ENCODE measurements at regions of chr17 and their contacts with region 1.

Region 1: GRCh38 chr17:7614422-7615264 is at the start of gene FXR2:
- DNase-seq: peak; percentile 100
- ATAC-seq: peak; percentile 96
- H3K4me3 Mint-ChIP-seq: peak within 1 kb of the TSS; percentile 90
- H3K27ac Mint-ChIP-seq: peak within 1 kb of the TSS; percentile 89
- H3K4me1 Mint-ChIP-seq: peaks cover 31% of the 10 kb centered on the region
- H3K27me3 Mint-ChIP-seq: no peaks in the 10 kb centered on the region
- CTCF ChIP-seq: peak; percentile 53
- total RNA-seq, gene FXR2: 28.6 to 33.1 TPM

Region 2: DNA sequence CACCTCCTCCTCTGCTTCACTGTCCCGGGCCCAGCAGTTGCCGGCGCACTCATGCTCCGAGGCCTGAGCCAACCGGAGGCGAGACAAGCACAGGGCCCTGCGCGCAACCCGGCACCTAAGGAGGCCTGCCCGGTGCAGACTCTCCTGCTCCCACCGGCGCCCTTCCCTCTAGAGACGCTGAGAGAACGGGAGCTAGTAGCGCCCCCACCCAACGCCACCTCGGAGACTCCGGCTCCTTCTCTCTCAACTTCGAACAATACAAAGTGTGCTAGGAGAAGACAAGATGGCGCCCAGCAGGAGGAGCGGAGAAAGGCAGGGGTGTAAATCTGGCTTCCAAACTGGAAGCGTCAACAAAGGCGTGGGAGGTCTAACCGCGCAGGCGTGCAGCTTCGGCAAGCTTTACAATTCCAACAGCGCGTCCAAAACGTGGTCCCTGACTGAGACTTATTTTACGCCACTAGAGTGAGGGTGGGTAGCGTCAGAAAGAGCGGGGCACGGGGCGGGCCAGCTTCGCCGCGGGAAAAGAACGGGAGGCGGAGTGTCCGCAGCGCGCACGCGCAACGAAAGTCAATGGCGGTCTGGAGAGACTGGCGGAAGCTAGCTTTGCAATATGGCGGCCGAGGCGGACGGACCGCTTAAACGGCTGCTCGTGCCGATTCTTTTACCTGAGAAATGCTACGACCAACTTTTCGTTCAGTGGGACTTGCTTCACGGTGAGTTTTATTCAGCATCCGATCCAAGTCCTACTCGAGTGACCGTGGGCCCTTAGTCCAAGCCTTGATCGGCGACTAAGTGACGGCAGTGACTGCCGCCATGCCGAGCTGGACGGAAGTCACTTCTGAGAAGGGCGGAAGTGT is 31.2 kb before region 1 on chr17 and contains the start of gene MPDU1:
- CTCF ChIA-PET with region 1: interaction called, 12 read pairs
- POLR2A ChIA-PET with region 1: interaction called, 12 read pairs
- intact Hi-C with region 1: no loop called
- DNase-seq: peak; percentile 97
- ATAC-seq: peak; percentile 77
- H3K4me3 Mint-ChIP-seq: peak within 1 kb of the TSS; percentile 94
- H3K27ac Mint-ChIP-seq: peak within 1 kb of the TSS; percentile 99
- H3K4me1 Mint-ChIP-seq: peaks cover 55% of the 10 kb centered on the region
- H3K27me3 Mint-ChIP-seq: no peaks in the 10 kb centered on the region
- CTCF ChIP-seq: no peak
- total RNA-seq, gene MPDU1: 50.9 to 51.4 TPM

Region 3: DNA sequence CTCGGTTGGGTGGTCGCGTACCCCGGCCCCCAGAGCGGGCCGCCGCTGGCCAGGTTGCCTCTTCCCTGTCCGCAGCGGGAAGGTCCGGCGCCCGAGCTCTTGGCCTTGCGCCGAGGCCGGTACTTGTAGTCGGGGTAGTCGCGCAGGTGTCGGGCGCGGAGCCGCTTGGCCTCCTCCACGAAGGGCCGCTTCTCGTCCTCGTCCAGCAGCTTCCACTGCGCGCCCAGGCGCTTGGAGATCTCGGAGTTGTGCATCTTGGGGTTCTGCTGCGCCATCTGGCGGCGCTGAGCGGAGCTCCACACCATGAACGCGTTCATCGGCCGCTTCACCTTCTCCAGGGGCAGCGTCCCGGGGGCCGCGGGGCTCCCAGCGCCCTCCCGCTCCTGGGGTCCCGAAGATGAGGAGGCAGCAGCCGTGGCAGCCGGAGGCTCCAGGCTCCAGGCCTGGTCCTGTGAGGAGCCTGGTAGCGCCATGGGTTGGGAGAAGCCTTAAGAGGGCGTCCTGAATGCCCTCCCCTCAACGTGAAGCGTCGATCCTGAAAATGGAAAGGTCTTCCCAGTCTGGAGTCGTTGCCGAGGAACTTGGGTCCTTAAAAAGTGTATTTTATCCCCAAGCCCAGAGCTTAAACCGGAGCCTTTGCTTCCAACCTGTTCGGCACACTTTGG is 25.3 kb before region 1 on chr17:
- CTCF ChIA-PET with region 1: interaction called, 15 read pairs
- POLR2A ChIA-PET with region 1: interaction called, 12 read pairs
- intact Hi-C with region 1: no loop called
- DNase-seq: peak; percentile 79
- ATAC-seq: peak; percentile 81
- H3K4me3 Mint-ChIP-seq: no peak overlapping the region
- H3K27ac Mint-ChIP-seq: no peak overlapping the region
- H3K4me1 Mint-ChIP-seq: peaks cover 15% of the 10 kb centered on the region
- H3K27me3 Mint-ChIP-seq: no peaks in the 10 kb centered on the region
- CTCF ChIP-seq: peak; percentile 82

Region 4: DNA sequence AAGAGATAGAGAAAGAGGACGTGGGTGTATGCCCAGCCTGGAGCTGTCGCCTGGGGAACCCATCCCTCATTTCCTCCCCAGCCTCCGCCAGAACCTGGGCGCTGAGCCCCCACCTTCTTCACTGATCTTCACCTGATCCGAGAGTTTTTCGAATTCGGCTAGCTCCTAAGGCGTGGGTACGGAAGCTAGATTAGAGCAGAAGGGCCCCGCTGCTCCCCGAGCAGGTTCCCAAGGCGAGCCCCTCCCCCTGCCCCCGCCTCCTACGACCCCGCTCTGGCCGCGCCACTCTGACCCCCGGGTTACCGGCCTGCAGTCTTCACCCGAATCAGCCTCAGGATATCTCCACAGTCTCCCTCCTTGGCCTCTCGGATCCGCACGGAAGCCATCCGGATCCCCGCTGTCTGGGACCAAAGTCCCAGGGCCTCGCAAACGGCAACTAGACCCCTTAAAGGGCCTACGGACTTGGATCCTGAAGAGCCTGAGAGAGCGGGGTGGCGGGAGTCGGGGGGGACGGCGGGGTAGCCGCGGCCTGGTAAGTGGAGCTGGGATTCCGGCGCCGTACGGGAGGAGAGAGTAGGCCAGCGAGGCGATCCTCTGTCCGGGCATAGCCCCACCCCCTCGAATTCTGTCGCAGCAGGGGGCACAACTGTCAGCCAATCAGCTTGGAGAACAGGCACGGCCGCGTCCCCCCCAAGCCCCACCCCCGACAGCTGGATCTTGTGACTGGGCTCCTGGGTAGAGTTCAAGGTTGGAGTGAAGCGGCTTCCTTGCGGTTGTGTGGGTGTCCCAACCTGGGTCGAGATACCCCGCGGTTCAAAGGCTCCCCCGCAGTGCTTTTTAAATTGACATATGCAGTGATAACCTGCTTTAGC is 12.8 kb after region 1 on chr17 and contains the start of gene SAT2:
- CTCF ChIA-PET with region 1: interaction called, 5 read pairs
- POLR2A ChIA-PET with region 1: interaction called, 15 read pairs
- intact Hi-C with region 1: no loop called
- DNase-seq: peak; percentile 93
- ATAC-seq: peak; percentile 96
- H3K4me3 Mint-ChIP-seq: peak within 1 kb of the TSS; percentile 87
- H3K27ac Mint-ChIP-seq: peak within 1 kb of the TSS; percentile 76
- H3K4me1 Mint-ChIP-seq: peaks cover 10% of the 10 kb centered on the region
- H3K27me3 Mint-ChIP-seq: no peaks in the 10 kb centered on the region
- CTCF ChIP-seq: no peak
- total RNA-seq, gene SAT2: 15.6 to 22.2 TPM